Posterior vena cava (tissue), 2 donors: ENCODE measurements at regions of chr12 and their contacts with region 1.

Region 1: GRCh38 chr12:22173177-22173576 is 127.2 kb downstream of the CMAS start:
- DNase-seq: no peak

Region 2: DNA sequence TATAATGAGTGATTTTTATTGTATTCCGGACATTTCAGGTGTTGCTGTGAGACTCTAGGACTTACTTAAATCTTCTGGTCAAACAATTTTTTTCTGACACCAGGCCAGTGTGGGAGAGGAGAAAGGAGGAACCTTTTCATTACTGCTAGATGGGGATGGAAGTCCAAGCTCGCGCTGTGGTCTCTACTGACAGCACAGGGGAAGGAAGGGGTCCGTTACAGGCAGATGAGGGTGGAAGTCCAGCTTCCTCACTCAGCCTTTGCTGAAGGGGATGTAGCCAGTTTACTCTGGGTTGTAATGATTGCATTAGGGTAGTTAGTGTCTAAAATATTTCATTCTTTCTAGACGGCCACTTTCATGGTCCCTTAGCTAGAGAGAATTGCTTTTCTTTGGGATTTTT is 187.6 kb after region 1 on chr12:
- intact Hi-C with region 1: no loop called
- DNase-seq: peak; percentile 71

Region 3: DNA sequence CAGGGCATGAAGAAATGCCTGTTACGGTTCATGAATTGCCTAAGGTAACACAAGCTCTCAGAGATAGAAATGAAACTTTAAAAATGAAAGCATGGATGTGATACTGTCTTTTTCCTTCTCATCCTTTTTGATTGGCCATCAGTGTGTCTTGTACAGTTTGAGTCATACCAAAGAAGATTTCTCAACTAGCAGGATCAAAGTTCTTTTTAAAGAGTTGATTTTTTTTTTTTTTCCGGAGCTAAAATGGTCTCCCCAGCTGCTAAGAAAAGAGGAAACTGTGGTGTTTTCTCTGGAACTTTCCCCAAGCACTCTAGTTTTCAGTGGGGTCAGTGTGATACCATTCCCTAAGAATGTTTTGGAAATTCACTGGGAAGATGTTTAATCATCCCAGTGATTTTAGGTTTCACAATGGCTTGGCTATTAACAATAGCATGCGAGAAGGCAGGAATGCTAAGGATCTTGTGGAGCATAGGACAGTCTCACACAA is 556.8 kb after region 1 on chr12:
- intact Hi-C with region 1: loop called in 1 of 2 experiments (anchors 5 kb)
- DNase-seq: no peak